SK-N-SH (cell line): ENCODE measurements at regions of chr4 and their contacts with region 1.

Region 1: DNA sequence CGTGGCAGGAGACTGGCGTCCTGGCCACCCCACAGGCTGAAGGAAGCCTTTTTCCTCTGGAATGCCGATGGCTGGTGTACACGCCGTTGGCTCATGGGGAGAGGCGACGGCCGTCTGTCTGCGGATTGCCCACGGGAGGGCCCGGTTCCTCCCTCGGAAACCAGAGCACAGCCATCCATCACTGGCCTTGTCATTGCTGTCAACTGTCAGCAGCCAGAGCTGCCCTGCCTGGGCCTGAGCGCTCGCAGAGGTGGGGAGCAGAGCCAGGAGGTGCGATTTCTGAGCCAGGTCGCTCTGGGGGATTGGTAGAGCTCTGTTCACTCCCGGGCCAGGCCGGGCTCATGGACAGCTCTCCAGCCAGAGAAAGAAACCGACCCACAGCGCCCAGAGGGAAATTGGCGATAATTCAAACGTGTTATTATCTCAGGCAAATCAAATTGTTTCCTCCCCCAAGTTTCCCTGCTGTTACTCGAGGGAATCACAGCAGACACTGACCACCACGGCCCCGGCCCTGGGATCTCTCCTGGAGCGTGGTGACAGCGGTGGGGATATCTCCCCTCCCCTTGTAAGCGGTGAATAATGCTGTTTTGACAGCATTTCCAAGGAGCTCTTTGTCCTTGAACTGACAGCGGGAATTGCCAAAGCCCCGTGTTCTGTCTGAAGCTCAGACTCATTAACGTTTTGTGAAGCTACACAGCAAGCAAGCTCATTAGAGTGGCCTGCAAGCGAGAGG is 220.9 kb upstream of the PSAPL1 start:
- DNase-seq: peak; percentile 86
- H3K4me3 ChIP-seq: no peak overlapping the region
- H3K27ac ChIP-seq: peak overlapping the region; percentile 8 to 41; a peak in 1 of 4 replicates
- H3K4me1 ChIP-seq: peaks cover 17 to 34% of the 10 kb centered on the region in 2 experiments; a peak in 3 of 4 replicates
- H3K27me3 ChIP-seq: no peaks in the 10 kb centered on the region
- CTCF ChIP-seq: no peak
- EP300 ChIP-seq: peak; percentile 60 to 63
- RAD21 ChIP-seq: peak; percentile 4; the same call in 1 of the 2 replicates

Region 2: GRCh38 chr4:7280926-7281690 is 374.6 kb before region 1 on chr4:
- CTCF ChIA-PET with region 1: no interaction called
- POLR2A ChIA-PET with region 1: no interaction called
- DNase-seq: no peak
- H3K4me3 ChIP-seq: no peak overlapping the region
- H3K27ac ChIP-seq: no peak overlapping the region
- H3K4me1 ChIP-seq: peaks cover 0 to 21% of the 10 kb centered on the region in 2 experiments; a peak in 1 of 4 replicates
- H3K27me3 ChIP-seq: no peaks in the 10 kb centered on the region
- CTCF ChIP-seq: no peak
- EP300 ChIP-seq: no peak
- RAD21 ChIP-seq: no peak

Region 3: DNA sequence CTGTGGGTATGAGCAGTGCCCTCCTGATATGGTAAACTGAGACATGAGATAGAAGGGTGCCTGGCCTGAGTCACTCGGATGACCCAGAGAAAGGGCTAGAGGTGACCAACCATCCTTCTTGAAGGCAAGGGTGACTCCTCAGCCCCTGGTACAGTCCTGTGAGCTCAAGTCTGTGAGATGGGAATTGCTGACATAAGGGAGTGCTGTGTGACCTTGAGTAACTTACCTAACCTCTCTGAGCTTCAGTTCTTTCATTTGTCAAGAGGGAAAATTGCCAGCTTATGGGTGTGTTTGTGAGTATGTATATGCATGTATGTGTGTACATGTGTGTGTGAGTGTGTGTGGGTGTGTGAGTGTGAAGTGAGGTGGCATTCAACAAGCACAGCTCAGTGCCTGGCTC is 10.5 kb before region 1 on chr4:
- CTCF ChIA-PET with region 1: interaction called, 10 read pairs
- POLR2A ChIA-PET with region 1: no interaction called
- DNase-seq: no peak
- H3K4me3 ChIP-seq: no peak overlapping the region
- H3K27ac ChIP-seq: no peak overlapping the region
- H3K4me1 ChIP-seq: peaks cover 0 to 19% of the 10 kb centered on the region in 2 experiments; a peak in 3 of 4 replicates
- H3K27me3 ChIP-seq: no peaks in the 10 kb centered on the region
- CTCF ChIP-seq: no peak
- EP300 ChIP-seq: no peak
- RAD21 ChIP-seq: no peak

Region 4: GRCh38 chr4:7802093-7802726 is 146.5 kb after region 1 on chr4:
- CTCF ChIA-PET with region 1: no interaction called
- POLR2A ChIA-PET with region 1: no interaction called
- DNase-seq: peak; percentile 80
- H3K4me3 ChIP-seq: no peak overlapping the region; a peak in 1 of 4 replicates
- H3K27ac ChIP-seq: peak overlapping the region; percentile 19 to 67
- H3K4me1 ChIP-seq: peaks cover 20 to 30% of the 10 kb centered on the region in 2 experiments
- H3K27me3 ChIP-seq: no peaks in the 10 kb centered on the region
- CTCF ChIP-seq: peak; percentile 89
- EP300 ChIP-seq: no peak
- RAD21 ChIP-seq: peak; percentile 94